ENCODE measurements at regions of chr7 and their contacts with region 1.

Region 1: DNA sequence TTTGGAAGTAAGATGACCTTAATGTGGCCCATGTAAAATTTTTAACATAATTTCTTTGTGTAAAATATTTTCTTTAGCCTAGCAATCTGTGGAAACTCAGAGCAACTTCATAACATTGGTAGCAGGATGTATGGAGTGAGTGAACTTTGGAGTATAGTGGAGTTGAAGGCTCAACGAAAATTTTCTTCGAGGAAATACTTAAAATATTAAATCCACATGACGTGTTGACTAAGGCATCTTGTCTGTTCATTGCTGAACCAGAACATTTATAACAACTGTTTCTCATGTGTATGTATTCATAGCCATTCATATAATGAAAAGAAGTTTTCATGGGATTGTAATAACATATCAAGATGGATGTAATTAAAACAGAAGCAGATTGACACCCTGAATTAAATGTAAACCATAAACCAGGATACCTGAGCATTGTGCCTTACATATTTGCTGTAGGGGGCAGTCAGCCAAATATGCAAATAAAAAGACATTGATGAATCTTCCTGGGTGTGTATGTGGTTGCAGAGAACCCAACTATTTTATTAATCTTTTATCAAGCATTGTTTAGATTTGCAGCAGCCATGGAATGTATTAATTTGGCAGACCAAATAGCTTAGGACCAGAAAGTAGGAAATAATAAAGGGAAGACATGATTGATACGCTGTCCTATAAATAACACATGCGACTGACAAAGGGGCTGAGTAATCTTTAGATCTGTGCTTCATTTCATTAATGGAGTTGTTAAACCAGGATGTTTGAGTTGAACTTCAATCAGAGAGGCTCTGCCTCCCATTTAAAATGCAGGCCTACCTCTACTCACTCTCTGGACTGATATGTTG is 11.5 kb downstream of the AUTS2 start:
- DNase-seq: no peak
- ATAC-seq: no peak
- H3K4me3 Mint-ChIP-seq: no peak overlapping the region
- H3K27ac Mint-ChIP-seq: no peak overlapping the region
- H3K4me1 Mint-ChIP-seq: no peaks in the 10 kb centered on the region
- H3K27me3 Mint-ChIP-seq: peaks cover 2% of the 10 kb centered on the region
- CTCF ChIP-seq: no peak

Region 2: DNA sequence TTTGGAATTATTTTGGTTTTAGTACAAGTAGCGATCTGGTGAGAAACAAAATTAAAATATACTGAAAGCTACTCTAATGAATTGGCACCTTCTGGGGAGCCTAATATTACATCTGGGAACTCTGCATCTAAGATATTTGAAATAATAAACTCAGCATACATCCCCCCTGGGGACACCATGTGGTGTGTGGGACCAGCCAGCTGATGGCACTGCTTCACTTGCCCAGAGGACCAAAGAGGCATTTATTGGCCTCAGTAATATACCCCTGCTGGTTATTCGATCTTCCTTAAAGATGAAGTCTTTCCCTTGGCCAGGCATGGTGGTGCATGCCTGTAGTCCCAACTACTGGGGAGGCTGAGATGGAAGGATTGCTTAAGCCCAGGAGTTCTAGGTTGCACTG is 206.6 kb before region 1 on chr7:
- CTCF ChIA-PET with region 1: no interaction called
- POLR2A ChIA-PET with region 1: no interaction called
- intact Hi-C with region 1: no loop called
- DNase-seq: no peak
- ATAC-seq: no peak
- H3K4me3 Mint-ChIP-seq: no peak overlapping the region
- H3K27ac Mint-ChIP-seq: no peak overlapping the region
- H3K4me1 Mint-ChIP-seq: no peaks in the 10 kb centered on the region
- H3K27me3 Mint-ChIP-seq: no peaks in the 10 kb centered on the region
- CTCF ChIP-seq: no peak

Region 3: DNA sequence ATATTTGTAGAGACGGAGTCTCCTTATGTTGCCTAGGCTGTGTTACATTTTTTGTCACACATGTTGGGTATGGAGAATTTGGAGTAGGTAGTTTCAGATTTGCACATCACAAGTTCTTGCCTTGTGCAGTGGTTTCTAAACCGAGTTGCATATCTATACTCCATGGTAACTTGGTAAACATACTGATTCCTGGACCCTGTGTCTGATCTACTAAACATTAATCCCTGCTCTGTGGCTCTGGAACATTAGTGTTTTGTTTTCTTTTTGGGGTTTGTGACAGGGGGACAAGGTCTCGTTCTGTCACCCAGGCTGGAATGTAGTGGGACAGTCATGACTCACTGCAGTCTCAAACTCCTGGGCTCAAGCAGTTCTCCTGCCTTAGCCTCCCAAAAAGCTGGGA is 13.2 kb after region 1 on chr7:
- CTCF ChIA-PET with region 1: no interaction called
- POLR2A ChIA-PET with region 1: no interaction called
- intact Hi-C with region 1: loop called (anchors 2 kb)
- DNase-seq: no peak
- ATAC-seq: no peak
- H3K4me3 Mint-ChIP-seq: no peak overlapping the region
- H3K27ac Mint-ChIP-seq: no peak overlapping the region
- H3K4me1 Mint-ChIP-seq: peaks cover 8% of the 10 kb centered on the region
- H3K27me3 Mint-ChIP-seq: no peaks in the 10 kb centered on the region
- CTCF ChIP-seq: no peak

Region 4: DNA sequence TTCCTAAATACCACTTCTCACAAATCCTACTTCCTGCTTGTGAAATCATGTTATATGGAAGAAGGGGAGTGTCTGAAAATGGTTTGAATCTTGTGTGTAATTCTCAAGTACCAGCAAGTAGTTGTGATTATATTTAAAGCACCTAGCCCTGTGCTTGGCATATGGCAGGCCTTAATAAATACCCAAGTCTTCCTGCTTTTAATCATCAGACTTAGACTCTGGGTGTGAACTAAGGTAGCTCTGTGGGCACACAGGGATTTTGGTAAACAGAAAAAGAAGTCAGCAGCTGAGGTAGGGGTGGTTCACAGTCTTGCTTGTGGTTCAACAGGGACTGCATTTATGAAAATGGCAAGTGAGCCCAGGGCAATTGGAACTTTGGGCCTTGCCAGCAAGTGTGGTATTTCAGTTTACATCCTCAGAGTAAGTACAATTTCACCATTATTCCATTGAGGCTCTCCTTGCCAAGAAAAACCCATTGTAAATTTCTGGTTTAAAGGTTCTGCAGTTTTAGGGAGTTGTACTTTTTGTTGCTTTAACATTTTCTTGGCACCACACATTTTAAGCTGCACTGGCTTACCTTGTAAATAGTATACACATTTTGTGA is 204.0 kb after region 1 on chr7:
- CTCF ChIA-PET with region 1: no interaction called
- POLR2A ChIA-PET with region 1: no interaction called
- intact Hi-C with region 1: no loop called
- DNase-seq: no peak
- ATAC-seq: no peak
- H3K4me3 Mint-ChIP-seq: no peak overlapping the region
- H3K27ac Mint-ChIP-seq: no peak overlapping the region
- H3K4me1 Mint-ChIP-seq: no peaks in the 10 kb centered on the region
- H3K27me3 Mint-ChIP-seq: no peaks in the 10 kb centered on the region
- CTCF ChIP-seq: no peak

Measured in activated B cell treated with CpG ODN at 0.5 μM for 24 hours (primary cell).